Left ventricle myocardium inferior (tissue), 1 donor: ENCODE measurements at regions of chr3 and their contacts with region 1.

Region 1: GRCh38 chr3:171829841-171830517 is 13.2 kb upstream of the TMEM212 start:
- DNase-seq: peak; percentile 91
- H3K4me3 ChIP-seq: no peak overlapping the region
- H3K27ac ChIP-seq: peak overlapping the region; percentile 85
- H3K4me1 ChIP-seq: peaks cover 52% of the 10 kb centered on the region
- H3K27me3 ChIP-seq: no peaks in the 10 kb centered on the region
- CTCF ChIP-seq: peak; percentile 81

Region 2: GRCh38 chr3:172332256-172333041 is 502.5 kb after region 1 on chr3:
- intact Hi-C with region 1: loop called (anchors 10 kb)
- DNase-seq: peak; percentile 37
- H3K4me3 ChIP-seq: no peak overlapping the region
- H3K27ac ChIP-seq: peak overlapping the region; percentile 48
- H3K4me1 ChIP-seq: peaks cover 9% of the 10 kb centered on the region
- H3K27me3 ChIP-seq: no peaks in the 10 kb centered on the region
- CTCF ChIP-seq: peak; percentile 94